T-cell (primary cell): ENCODE measurements at regions of chr16 and their contacts with region 1.

Region 1: DNA sequence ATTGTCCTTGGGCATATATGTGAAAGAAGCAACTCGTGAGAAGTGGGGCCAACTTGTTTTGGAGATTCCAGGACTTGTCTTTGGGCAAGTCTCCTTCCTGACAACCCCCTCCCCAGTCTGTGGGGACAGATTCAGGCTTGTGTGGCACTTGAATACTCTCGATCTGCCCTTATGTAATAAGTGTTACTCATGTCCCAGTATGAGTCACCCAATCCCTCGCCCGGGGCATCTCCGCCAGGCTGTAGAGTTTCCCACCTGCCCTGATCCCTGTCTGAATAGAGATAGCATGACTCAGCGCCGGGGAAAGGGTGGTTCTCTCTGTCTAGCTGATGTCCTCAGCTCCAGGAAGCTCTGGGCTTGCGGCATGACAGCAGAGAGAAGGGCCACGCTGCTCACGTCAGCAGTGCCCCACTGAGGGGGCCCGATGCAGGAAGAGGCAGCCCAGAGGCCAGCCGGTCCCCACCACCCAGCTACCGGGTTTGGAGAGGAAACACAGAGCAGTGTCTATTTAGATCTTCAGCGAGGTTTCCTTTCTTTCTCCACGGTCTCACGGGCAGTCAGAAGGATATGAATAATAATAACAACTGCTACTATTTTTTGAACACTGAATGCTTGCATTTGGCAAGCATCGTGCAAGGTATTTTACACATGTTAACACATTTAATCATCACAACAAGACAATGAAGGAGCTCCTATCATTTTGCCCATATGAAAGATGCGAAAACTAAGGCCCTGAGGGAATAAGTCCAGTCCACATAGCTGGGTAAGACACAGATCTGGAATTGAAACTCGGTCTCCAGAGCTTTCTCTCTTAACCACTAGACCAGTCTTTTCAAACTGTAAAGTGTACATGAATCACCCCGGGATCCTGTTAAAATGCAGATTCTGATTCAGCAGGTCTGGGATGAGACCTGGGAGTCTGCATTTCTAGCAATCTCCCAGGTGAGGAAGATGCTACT is 426.7 kb upstream of the MAF start:
- DNase-seq: peak in 32 of 35 experiments; percentile 0 to 46 (median 12)
- ATAC-seq: peak; percentile 62 to 82 (median 67)
- H3K4me3 ChIP-seq: peak overlapping the region in 1 of 2 donors; percentile 9
- H3K4me3 Mint-ChIP-seq: peak overlapping the region in 2 of 3 donors; percentile 6 to 40
- H3K27ac ChIP-seq: no peak overlapping the region
- H3K27ac Mint-ChIP-seq: peak overlapping the region in 1 of 2 donors; percentile 73
- H3K4me1 ChIP-seq: peaks cover 4 to 5% of the 10 kb centered on the region in 2 experiments
- H3K4me1 Mint-ChIP-seq: peaks cover 10 to 18% (median 14%) of the 10 kb centered on the region in 3 donors
- H3K27me3 ChIP-seq: peaks cover 0 to 4% of the 10 kb centered on the region in 2 experiments
- H3K27me3 Mint-ChIP-seq: peaks cover 0 to 4% of the 10 kb centered on the region in 2 donors

Region 2: DNA sequence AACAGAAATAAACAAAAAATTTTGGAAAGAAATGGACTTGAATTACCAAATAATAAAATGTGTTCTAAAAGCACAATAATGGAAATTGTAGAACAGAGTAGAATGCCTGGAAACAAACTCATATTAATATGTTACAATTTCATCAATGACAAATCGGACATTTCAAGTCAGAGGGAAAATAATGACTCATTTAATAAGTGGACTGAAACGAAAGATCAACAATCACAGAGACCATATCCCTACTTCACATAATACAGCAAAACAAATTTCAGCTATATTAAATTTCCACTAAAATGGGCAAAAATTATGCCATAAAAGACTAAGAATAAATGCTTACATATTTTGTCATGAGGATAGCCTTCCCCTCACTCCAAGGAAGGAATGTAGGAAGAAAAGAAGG is 751.4 kb after region 1 on chr16:
- CTCF ChIA-PET with region 1: no interaction called
- POLR2A ChIA-PET with region 1: interaction called in 1 of 2 experiments, 11 read pairs
- DNase-seq: no peak
- ATAC-seq: no peak
- H3K4me3 ChIP-seq: no peak overlapping the region
- H3K4me3 Mint-ChIP-seq: no peak overlapping the region
- H3K27ac ChIP-seq: no peak overlapping the region
- H3K27ac Mint-ChIP-seq: no peak overlapping the region
- H3K4me1 ChIP-seq: no peaks in the 10 kb centered on the region
- H3K4me1 Mint-ChIP-seq: peaks cover 3 to 13% (median 3%) of the 10 kb centered on the region in 3 donors
- H3K27me3 ChIP-seq: no peaks in the 10 kb centered on the region
- H3K27me3 Mint-ChIP-seq: no peaks in the 10 kb centered on the region